Caco-2 (cell line): ENCODE measurements at regions of chr11 and their contacts with region 1.

Region 1: GRCh38 chr11:66159324-66159984 is 89.4 kb downstream of the PACS1 start:
- DNase-seq: no peak
- H3K4me3 ChIP-seq: no peak overlapping the region
- H3K4me3 Mint-ChIP-seq: no peak overlapping the region
- H3K27ac Mint-ChIP-seq: no peak overlapping the region
- H3K4me1 ChIP-seq: peaks cover 51% of the 10 kb centered on the region
- H3K4me1 Mint-ChIP-seq: peaks cover 25% of the 10 kb centered on the region
- H3K27me3 ChIP-seq: no peaks in the 10 kb centered on the region
- H3K27me3 Mint-ChIP-seq: no peaks in the 10 kb centered on the region
- CTCF ChIP-seq: no peak

Region 2: DNA sequence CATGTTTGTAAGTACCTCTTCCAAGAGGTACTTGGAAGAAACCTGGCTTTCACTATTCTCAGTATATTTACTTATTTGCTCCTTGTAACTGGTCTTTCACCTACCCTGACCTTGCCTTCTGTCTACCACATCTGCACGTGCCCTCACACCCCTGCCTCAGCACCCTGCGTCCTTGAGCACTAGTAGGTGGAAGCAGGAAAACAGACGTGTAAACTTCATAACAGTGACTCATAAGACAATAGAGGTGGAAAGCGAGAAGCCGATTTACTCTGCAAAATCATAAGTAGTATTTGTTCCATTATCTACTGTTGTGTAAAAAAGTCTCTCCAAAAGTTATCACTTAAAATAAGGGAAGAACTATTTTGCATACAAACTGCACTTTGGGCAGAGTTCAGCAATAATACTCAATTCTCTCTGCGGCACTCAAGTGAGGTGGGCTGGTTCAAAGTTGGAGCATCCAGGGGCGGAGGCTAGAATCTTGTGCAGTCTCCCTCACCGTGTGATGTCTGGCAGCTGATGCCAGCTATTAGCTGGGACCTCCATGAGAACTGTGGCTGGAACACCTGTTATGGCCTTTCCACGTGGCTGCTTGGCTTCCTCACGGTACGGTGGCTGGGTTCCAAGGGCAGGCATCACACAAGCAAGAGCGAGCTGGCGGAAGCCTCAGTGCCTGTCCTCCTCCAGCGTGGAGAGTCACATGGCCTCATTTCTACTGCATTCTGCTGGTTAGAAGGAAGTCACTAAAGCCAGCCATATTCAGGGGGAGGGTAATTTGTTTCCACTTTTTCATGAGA is 59.0 kb before region 1 on chr11:
- CTCF ChIA-PET with region 1: no interaction called
- POLR2A ChIA-PET with region 1: interaction called, 11 read pairs
- intact Hi-C with region 1: no loop called
- DNase-seq: no peak
- H3K4me3 ChIP-seq: no peak overlapping the region
- H3K4me3 Mint-ChIP-seq: no peak overlapping the region
- H3K27ac Mint-ChIP-seq: peak overlapping the region; percentile 60
- H3K4me1 ChIP-seq: no peaks in the 10 kb centered on the region
- H3K4me1 Mint-ChIP-seq: no peaks in the 10 kb centered on the region
- H3K27me3 ChIP-seq: no peaks in the 10 kb centered on the region
- H3K27me3 Mint-ChIP-seq: no peaks in the 10 kb centered on the region
- CTCF ChIP-seq: no peak

Region 3: GRCh38 chr11:66242095-66242765 is 82.8 kb after region 1 on chr11:
- CTCF ChIA-PET with region 1: no interaction called
- POLR2A ChIA-PET with region 1: no interaction called
- intact Hi-C with region 1: no loop called
- DNase-seq: no peak
- H3K4me3 ChIP-seq: no peak overlapping the region
- H3K4me3 Mint-ChIP-seq: no peak overlapping the region
- H3K27ac Mint-ChIP-seq: no peak overlapping the region
- H3K4me1 ChIP-seq: no peaks in the 10 kb centered on the region
- H3K4me1 Mint-ChIP-seq: no peaks in the 10 kb centered on the region
- H3K27me3 ChIP-seq: no peaks in the 10 kb centered on the region
- H3K27me3 Mint-ChIP-seq: no peaks in the 10 kb centered on the region
- CTCF ChIP-seq: no peak

Region 4: DNA sequence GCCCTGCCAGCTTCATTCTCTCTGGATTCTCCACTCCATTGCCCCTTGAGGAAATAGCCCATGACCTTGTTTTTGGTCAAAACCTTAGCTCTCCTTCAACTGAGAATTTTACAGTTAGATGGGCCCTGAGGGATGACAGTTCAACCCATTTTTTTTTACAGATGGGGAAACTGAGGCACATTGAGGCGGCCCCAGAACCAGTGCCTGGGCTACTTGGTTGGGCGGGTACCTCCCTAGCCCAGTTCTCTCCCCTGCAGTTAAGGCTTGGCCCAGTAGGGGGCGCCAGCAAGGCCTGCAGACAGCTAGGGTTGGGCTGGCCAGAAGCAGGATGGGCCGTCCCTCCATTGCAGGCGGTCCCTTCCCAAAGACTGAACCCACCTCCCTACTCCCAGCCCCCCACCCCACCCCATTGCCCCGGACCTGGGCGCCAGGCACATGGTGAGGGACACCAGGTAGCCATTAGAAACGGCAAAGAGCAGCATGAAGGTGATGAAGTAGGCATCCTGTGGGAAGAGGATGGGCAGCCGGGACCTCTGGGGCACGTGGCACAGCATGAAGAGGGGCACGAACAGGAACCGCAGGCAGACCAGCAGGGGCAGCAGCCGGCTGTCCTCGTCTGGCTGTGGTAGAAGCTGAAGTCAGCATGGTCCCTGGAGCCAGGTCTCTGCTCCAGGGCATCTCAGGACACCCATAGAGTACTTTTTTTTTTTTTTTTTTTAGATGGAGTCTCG is 204.5 kb after region 1 on chr11:
- CTCF ChIA-PET with region 1: no interaction called
- POLR2A ChIA-PET with region 1: no interaction called
- intact Hi-C with region 1: no loop called
- DNase-seq: peak; percentile 75 to 83
- H3K4me3 ChIP-seq: no peak overlapping the region
- H3K4me3 Mint-ChIP-seq: no peak overlapping the region
- H3K27ac Mint-ChIP-seq: peak overlapping the region; percentile 48
- H3K4me1 ChIP-seq: peaks cover 9% of the 10 kb centered on the region
- H3K4me1 Mint-ChIP-seq: peaks cover 12% of the 10 kb centered on the region
- H3K27me3 ChIP-seq: no peaks in the 10 kb centered on the region
- H3K27me3 Mint-ChIP-seq: no peaks in the 10 kb centered on the region
- CTCF ChIP-seq: peak; percentile 88 to 90

Region 5: GRCh38 chr11:66498506-66498905 is 339.1 kb after region 1 on chr11:
- CTCF ChIA-PET with region 1: no interaction called
- POLR2A ChIA-PET with region 1: no interaction called
- intact Hi-C with region 1: no loop called
- DNase-seq: no peak
- H3K4me3 ChIP-seq: no peak overlapping the region
- H3K4me3 Mint-ChIP-seq: no peak overlapping the region
- H3K27ac Mint-ChIP-seq: no peak overlapping the region
- H3K4me1 ChIP-seq: peaks cover 13% of the 10 kb centered on the region
- H3K4me1 Mint-ChIP-seq: no peaks in the 10 kb centered on the region
- H3K27me3 ChIP-seq: no peaks in the 10 kb centered on the region
- H3K27me3 Mint-ChIP-seq: no peaks in the 10 kb centered on the region
- CTCF ChIP-seq: no peak